HEK293 (cell line): ENCODE measurements at regions of chrX and their contacts with region 1.

Region 1: DNA sequence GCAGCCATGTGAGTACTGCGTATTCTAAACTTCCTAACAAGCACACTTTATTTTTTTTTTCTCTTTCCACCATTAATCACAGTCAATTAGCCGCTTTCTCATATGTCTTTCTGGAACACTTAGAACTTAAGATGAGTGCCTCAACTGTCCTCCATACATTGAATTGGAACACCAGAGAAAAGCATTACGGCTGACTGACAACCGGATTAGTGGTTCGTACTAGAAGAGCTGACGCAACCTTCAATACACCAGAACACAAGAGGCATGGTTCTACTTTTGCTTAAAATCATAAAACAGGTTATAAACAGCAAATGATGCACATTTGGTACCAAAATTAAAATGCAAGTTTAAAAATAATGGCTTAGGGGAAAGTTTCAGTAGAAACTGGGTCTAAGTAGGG is 3.3 kb downstream of the TMEM47 start:
- H3K4me3 ChIP-seq: no peak overlapping the region; the same call in 1 of the 2 replicates
- H3K27ac ChIP-seq: no peak overlapping the region
- H3K4me1 ChIP-seq: no peaks in the 10 kb centered on the region
- CTCF ChIP-seq: no peak

Region 2: DNA sequence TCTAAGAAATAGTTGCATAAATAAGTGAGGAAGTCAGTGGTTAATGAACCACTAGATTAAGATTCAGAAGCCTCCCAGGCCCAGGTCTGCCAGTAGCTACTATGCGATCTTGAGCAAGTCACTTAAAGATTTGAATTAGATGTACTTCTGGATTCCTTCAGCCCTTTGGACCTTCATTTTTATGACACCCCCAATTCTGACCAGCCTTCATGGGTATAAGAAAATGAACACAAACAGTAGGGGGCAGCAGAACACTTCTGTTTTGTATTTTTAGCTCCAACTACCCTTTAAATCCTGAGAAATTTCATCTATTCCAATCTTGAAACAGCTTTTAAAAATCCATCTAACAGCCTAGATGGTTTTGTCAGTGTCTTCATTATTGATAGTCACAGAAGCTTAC is 15.7 kb before region 1 on chrX:
- CTCF ChIA-PET with region 1: interaction called, 16 read pairs
- POLR2A ChIA-PET with region 1: no interaction called
- H3K4me3 ChIP-seq: no peak overlapping the region
- H3K27ac ChIP-seq: no peak overlapping the region
- H3K4me1 ChIP-seq: no peaks in the 10 kb centered on the region
- CTCF ChIP-seq: no peak